ENCODE measurements at regions of chr9 and their contacts with region 1.

Region 1: DNA sequence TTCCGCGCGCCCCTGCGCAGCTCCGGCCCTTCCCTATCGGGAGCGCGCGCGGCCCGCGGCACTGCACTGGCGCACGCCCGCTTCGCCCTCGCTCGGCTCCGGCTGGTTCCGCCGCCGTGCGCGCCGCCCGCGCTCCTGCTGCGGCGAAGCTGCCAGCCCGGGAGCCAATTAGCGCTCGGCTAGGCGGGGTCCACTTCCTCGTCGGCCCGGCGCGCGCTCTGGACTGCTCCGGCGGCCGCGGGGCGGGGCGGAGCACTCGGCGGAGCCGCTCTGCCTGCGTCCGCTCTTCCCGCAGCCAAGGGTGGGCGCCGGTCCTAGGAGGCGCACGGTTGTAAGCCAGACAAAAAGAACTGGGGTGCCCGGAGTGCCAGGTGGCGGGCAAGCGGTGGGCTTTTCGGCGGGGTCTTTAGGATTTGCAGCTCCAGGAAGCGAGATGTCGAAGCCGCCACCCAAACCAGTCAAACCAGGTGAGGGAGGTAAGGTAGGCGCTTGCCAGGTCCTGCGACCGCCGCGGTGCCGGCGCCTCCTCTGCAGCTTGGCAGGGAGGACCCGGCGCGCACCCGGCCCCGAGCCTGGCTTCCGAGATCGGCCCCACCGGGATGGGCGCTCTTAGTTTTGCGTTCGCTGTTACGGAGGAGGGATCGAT is at the start of gene OSTF1:
- DNase-seq: peak; percentile 95 to 99 (median 98)
- ATAC-seq: peak; percentile 92
- H3K4me3 ChIP-seq: peak within 1 kb of the TSS; percentile 92 to 93
- H3K27ac ChIP-seq: peak within 1 kb of the TSS; percentile 94 to 100
- H3K4me1 ChIP-seq: peaks cover 33 to 74% of the 10 kb centered on the region in 2 donors
- H3K27me3 ChIP-seq: no peaks in the 10 kb centered on the region
- CTCF ChIP-seq: no peak
- polyA plus RNA-seq, gene OSTF1: 54.8 to 75.8 (median 61.0) TPM

Region 2: DNA sequence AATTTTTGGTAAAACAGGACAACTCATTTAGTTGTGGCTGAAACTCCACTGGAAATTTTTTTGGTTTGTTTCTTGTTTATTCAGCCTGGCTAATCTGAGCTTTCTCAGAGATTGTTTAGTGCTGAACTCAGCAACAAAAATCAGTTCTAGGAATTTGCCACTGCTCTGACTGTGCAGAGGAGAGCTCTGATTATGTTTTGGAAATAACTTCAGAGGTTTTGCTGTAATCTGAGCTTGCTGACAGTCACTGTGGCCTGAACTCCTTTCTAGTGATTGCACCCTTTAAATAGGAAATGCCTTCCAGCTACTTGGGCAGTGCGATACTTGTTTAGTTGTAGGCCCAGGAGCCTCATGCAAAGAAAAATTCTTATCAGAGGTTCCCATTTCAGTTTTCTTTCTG is 60.2 kb after region 1 on chr9:
- intact Hi-C with region 1: loop called in 1 of 2 experiments (anchors 10 kb)
- DNase-seq: peak in 2 of 4 donors; percentile 70 to 81
- ATAC-seq: peak; percentile 79
- H3K4me3 ChIP-seq: no peak overlapping the region
- H3K27ac ChIP-seq: peak overlapping the region; percentile 36 to 84
- H3K4me1 ChIP-seq: peaks cover 0 to 59% of the 10 kb centered on the region in 2 donors
- H3K27me3 ChIP-seq: no peaks in the 10 kb centered on the region
- CTCF ChIP-seq: no peak